ENCODE measurements at regions of chr20 and their contacts with region 1.

Region 1: GRCh38 chr20:63627129-63627750 is 339 bp upstream of the GMEB2 start:
- DNase-seq: peak; percentile 94
- H3K4me3 Mint-ChIP-seq: peak overlapping the region; percentile 99
- H3K27ac Mint-ChIP-seq: peak overlapping the region; percentile 98
- H3K4me1 Mint-ChIP-seq: peaks cover 46% of the 10 kb centered on the region
- H3K27me3 Mint-ChIP-seq: no peaks in the 10 kb centered on the region

Region 2: DNA sequence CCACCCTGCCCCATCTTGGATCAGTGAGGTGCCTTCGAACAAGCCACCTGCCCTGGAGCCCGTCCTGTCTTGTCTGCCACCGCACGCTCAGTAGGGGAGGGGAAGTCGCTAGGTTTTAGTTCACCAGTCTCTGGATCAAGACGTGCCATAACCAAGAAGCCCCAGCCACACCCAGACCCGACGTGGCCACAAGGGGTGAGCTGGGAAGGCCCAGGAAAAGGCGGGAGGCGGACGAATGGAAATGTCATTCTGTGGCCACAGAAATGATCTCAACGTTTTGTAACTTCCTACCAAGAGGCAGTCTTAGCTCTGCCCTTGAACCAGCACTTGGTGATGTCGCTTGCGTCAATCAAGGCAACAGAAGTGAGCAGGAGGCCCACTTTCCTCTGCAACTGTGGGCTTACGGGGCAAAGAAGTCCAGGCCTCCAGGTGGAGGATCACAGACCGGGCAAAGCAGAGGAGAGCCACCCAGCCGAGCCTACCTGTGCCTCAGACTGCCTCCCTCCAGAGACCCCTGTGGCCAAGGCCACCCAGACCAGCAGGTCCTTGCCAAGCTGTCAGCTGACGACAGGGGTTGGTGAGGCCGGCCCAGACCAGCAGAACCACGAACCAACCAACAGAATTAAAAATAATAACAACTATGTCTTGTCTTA is 14.8 kb before region 1 on chr20:
- CTCF ChIA-PET with region 1: no interaction called
- DNase-seq: no peak
- H3K4me3 Mint-ChIP-seq: no peak overlapping the region
- H3K27ac Mint-ChIP-seq: no peak overlapping the region
- H3K4me1 Mint-ChIP-seq: no peaks in the 10 kb centered on the region
- H3K27me3 Mint-ChIP-seq: no peaks in the 10 kb centered on the region

Region 3: DNA sequence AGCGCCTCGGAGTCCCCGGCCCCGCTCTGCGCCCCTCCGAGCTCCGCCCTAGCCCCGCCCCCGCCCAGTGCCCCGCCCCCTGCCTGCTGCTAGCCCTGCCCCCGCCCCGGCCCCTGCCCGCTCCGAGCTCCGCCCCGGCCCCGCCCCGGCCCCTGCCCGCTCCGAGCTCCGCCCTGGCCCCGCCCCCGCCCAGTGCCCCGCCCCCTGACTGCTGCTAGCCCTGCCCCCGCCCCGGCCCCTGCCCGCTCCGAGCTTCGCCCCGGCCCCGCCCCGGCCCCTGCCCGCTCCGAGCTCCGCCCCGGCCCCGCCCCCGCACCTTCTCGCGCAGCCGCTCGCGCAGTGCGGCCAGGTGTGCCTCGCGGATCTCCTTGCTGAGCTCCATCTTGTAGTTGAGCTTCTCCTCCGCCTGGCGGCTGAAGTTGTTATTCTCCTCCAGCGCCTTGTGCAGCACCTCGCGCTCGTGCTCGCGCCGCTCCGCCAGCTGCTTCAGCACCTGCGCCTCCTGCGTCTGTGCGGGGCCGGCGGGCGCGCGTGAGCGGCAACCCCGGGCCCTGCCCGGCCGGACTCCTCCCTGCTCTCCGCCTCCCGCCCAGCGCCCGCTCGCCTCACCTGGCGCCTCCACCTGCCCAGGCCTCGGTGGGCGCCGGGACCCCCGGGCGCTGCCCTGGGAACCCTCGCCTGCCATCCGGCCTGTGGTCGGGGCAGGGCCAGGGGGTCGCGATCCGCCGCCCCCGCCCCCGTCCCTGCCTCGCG is 14.7 kb after region 1 on chr20:
- CTCF ChIA-PET with region 1: interaction called, 17 read pairs
- DNase-seq: peak; percentile 97
- H3K4me3 Mint-ChIP-seq: peak overlapping the region; percentile 74
- H3K27ac Mint-ChIP-seq: peak overlapping the region; percentile 93
- H3K4me1 Mint-ChIP-seq: peaks cover 37% of the 10 kb centered on the region
- H3K27me3 Mint-ChIP-seq: peaks cover 9% of the 10 kb centered on the region